ENCODE measurements at regions of chrX and their contacts with region 1.

Region 1: DNA sequence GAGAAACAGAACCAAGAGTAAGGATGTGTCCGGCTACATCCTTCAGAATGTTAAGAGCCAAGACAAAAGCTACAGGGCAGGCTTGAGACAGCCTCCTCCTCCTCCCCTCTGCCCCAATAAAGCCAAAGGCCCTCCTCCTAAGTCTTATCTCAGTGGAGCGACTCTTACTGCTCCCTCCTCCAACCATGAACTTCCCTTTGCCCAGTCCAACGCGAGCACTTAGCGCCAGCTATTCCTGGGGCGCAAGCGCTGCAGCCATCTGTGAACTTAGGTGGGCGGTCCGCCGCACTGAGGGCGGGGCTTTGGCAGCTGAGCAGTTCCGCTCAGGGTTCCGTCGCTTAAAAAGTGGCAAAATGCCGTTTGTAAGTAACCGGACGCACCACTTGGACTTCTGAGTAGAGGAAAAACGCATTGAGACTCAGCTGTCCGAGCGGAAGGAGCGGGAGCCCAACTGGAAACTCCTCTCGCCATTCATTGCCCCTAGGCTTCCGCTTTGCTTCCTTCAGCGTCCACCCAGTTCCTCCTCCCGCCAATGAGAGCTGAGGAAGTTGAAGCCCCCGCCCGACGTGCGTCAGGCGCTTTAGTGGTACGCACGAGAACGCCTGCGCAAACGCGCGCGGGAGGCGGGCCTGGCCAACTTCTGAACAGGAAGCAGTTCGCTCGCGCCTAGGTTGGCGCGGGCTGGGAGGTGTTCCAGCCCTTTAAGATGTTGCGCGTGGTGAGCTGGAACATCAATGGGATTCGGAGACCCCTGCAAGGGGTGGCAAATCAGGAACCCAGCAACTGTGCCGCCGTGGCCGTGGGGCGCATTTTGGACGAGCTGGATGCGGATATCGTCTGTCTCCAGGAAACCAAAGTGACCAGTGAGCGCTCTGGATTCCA is at the start of gene APEX2:
- DNase-seq: peak; percentile 84
- H3K4me3 Mint-ChIP-seq: peak within 1 kb of the TSS; percentile 96
- H3K27ac Mint-ChIP-seq: peak within 1 kb of the TSS; percentile 91
- H3K4me1 Mint-ChIP-seq: peaks cover 10% of the 10 kb centered on the region
- H3K27me3 Mint-ChIP-seq: no peaks in the 10 kb centered on the region
- total RNA-seq, gene APEX2: 33.9 and 36.8 TPM in 2 replicates

Region 2: GRCh38 chrX:54182864-54183608 is 816.9 kb before region 1 on chrX and contains the start of gene FAM120C:
- intact Hi-C with region 1: loop called (anchors 5 kb)
- DNase-seq: peak; percentile 38
- H3K4me3 Mint-ChIP-seq: peak within 1 kb of the TSS; percentile 90
- H3K27ac Mint-ChIP-seq: peak within 1 kb of the TSS; percentile 91
- H3K4me1 Mint-ChIP-seq: peaks cover 40% of the 10 kb centered on the region
- H3K27me3 Mint-ChIP-seq: no peaks in the 10 kb centered on the region
- total RNA-seq, gene FAM120C: 10.4 and 11.8 TPM in 2 replicates

Region 3: DNA sequence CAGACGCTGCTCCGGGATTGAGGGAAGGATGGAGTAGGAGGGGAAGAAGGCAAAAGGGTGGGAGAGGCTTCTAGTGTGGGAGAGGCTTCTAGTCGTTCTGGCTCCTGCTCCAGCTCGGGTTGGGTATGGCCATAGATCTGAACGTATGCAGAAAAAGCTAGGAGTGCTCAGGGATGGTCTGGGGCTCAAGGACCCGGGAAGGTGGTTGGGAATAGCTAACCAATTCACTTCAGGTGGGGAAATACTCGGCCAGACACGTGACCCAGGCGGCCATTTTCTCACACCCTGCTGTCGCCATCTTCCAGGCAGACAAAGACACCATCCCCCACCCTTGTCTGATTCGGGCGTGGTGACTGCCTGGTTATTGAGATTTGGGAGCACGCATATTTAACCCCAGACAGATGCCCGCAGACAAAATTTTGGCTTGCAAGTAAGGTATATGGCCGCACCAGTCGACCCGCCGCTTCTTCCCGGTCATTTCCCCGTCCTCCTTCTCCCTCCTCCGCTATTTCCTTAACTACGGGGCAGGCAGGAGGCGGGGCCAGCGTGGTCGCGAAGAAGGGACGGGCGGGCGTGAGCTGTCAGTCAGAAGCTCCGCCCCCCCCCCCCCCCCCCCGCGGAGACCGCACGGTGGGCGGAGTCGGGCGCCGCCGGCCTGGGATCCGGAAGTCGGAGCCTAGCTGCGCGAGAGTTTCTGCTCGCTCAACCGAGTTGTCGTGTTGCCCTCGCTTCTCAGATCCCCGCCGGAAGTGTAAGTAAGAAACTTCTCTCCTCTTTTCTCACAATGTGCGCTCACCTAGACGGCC is 470.2 kb before region 1 on chrX and contains the start of gene GNL3L:
- intact Hi-C with region 1: loop called (anchors 1 kb)
- DNase-seq: peak; percentile 69
- H3K4me3 Mint-ChIP-seq: peak within 1 kb of the TSS; percentile 95
- H3K27ac Mint-ChIP-seq: peak within 1 kb of the TSS; percentile 94
- H3K4me1 Mint-ChIP-seq: peaks cover 26% of the 10 kb centered on the region
- H3K27me3 Mint-ChIP-seq: no peaks in the 10 kb centered on the region
- total RNA-seq, gene GNL3L: 75.5 and 76.1 TPM in 2 replicates

Region 4: DNA sequence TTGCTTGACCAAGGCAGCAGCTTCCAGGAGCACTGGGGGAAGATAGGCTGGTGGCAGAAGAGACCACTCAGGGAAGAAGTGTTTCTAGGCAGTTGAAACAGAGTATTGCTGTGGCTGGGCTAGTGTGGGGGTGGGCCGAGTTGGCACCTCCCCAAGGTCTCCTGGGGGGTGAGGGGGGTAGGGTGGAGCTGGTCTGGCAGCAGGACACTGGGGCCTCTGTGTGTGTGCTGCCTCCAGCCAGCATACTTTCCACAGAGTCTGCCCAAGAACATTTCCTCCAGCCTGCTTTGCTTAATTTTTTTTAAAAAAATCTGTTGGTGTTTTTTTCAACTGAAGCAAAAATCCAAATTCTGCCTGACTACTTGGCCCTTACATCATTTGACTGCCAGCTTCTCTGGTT is 205.9 kb before region 1 on chrX:
- intact Hi-C with region 1: no loop called
- DNase-seq: no peak
- H3K4me3 Mint-ChIP-seq: no peak overlapping the region
- H3K27ac Mint-ChIP-seq: no peak overlapping the region
- H3K4me1 Mint-ChIP-seq: no peaks in the 10 kb centered on the region
- H3K27me3 Mint-ChIP-seq: no peaks in the 10 kb centered on the region

Region 5: DNA sequence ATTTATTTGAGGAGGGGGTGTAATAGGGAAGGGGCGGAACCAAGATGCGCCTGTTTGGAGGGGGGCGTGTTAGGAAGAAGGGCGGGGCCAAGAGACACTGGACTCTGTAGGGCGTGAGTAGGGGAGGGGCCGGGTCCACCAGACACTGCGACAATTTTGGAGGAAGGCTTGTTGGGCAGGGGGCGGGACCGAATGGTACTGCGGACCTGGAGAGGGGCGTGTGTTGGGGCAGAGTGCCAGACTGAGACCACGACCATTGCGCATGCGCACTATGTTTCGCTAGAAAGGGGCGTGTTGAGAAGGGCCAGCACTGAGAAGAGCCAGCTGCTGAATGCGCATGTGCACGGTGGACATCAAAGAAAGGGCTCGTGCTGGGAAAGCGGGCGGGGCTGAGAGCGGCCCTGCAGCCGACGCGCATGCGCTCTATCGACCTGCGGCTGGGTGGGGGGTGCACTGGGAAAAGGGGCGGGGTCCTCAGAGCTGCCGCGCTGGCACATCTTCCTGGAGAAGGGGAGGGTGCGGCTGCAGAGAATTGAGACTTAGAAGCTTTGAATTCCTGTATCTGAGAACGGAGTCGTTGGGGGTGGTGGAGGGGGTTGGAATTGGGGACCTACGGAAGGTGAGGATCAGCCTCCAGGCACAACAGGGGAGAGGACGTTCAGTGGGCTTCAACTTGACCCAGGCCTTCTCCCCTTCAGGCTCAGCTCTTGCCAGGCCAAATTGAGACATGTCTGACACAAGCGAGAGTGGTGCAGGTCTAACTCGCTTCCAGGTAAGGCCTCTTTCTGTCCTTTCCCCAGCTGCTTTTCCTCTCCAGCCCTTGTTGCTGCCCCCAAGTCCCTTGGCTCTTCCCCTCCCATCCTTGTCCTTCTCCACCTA is 191.1 kb before region 1 on chrX:
- intact Hi-C with region 1: loop called (anchors 1 kb)
- DNase-seq: peak; percentile 88
- H3K4me3 Mint-ChIP-seq: peak overlapping the region; percentile 89
- H3K27ac Mint-ChIP-seq: peak overlapping the region; percentile 85
- H3K4me1 Mint-ChIP-seq: peaks cover 17% of the 10 kb centered on the region
- H3K27me3 Mint-ChIP-seq: peaks cover 10% of the 10 kb centered on the region

Region 6: DNA sequence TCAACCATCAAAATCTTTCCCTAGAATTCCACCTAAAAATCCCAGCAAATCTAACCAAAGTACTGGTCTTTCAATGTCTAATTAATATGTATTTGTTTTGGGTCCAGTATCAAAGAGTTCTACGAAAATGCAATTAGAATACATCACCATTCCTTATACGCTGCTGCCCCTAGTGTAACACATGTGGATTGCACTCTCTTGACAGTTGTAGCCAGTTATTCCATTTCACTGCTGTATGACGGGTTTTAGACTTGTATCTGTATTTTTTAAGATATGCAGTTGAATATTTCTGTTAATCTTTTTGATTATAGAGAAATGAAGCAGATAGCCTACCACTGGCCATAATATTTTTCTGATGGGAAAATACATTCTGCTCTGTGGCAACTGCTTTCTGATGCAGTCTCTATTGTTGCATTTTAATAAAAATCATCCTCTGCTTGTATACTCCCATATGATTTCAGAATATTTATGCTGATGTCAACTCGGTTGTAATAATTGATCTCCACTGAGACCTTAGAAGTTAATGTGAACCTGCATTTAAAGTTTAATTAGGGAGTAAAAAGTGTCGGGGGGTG is 57.8 kb after region 1 on chrX:
- intact Hi-C with region 1: loop called (anchors 2 kb)
- DNase-seq: peak; percentile 0
- H3K4me3 Mint-ChIP-seq: peak overlapping the region; percentile 58
- H3K27ac Mint-ChIP-seq: no peak overlapping the region
- H3K4me1 Mint-ChIP-seq: peaks cover 12% of the 10 kb centered on the region
- H3K27me3 Mint-ChIP-seq: peaks cover under 1% of the 10 kb centered on the region

Region 7: DNA sequence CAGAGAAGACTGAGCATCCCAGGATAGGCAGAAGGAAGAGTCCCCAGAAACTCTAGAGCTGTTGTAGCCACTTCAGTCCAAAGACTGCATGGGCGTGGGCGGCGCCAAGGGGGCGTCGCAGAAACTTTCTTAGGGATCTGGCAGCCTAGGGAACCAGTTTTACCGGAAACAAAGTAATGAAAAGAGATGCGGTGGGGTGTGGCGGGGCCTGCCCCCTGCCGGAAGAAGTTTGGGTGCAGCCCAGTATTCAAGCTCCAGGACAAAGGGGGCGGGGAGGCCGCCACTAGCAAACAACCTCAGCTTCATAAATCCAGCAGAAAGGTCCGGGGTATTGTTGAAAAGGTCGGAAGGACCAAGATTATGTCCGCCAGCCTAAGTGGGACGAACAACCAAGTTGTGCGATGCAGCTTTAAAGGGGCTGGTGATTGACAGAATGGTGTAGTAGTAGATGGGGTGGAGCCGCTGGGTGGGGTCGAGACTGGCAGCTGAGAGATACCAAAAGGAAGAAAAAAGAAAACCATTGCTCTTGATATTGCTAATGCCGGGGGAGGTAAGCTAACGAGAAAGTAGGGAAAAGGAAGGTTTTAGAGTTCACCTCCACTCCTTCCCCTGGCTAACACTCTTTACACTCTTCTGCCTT is 908.1 kb after region 1 on chrX:
- intact Hi-C with region 1: loop called (anchors 5 kb)
- DNase-seq: peak; percentile 33
- H3K4me3 Mint-ChIP-seq: peak overlapping the region; percentile 85
- H3K27ac Mint-ChIP-seq: peak overlapping the region; percentile 92
- H3K4me1 Mint-ChIP-seq: peaks cover 31% of the 10 kb centered on the region
- H3K27me3 Mint-ChIP-seq: no peaks in the 10 kb centered on the region

Measured in activated T-helper 1 cell treated with anti-CD3 and anti-CD28 coated beads, Interleukin-12 subunit alpha, Interleukin-12 subunit beta, Interleukin-2, Interleukin-4 antibody, amounts not matched to agents 30 ng/mL and 10 ng/mL and 1 ng/mL, durations not matched to agents 14 hours and 24 hours and 36 hours (primary cell).